GM18951 (cell line): ENCODE measurements at regions of chr1 and their contacts with region 1.

Region 1: GRCh38 chr1:242017584-242018233 is 18.8 kb upstream of the MAP1LC3C start:
- POLR2A ChIP-seq: no peak

Region 2: GRCh38 chr1:241611063-241611462 is 406.6 kb before region 1 on chr1:
- in situ Hi-C with region 1: loop called (anchors 25 kb)
- POLR2A ChIP-seq: no peak